MCF 10A (cell line): ENCODE measurements at regions of chr16 and their contacts with region 1.

Region 1: GRCh38 chr16:48499923-48500381 is 110.0 kb downstream of the N4BP1 start:
- DNase-seq: peak; percentile 87
- H3K4me3 Mint-ChIP-seq: no peak overlapping the region
- H3K27ac Mint-ChIP-seq: peak overlapping the region; percentile 73
- H3K4me1 Mint-ChIP-seq: peaks cover 12% of the 10 kb centered on the region
- H3K27me3 Mint-ChIP-seq: no peaks in the 10 kb centered on the region
- CTCF ChIP-seq: no peak

Region 2: DNA sequence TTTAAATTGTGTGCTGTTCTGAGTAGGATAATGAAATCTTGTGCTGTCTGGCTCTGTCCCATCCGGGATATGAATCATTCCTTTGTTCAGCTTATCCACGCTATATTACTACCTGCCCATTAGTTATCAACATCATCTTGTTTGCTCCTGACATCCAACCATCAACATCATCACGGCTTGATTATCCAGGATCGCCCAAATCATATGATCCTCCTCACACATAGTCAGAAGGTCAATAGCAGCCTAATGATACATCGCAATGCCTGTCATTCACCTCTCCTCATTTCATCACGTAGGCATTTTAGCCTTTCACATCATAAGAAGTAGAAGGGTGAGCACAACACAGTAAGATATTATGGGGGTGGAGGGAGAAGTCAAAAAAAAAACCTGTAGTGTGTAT is 37.8 kb before region 1 on chr16:
- CTCF ChIA-PET with region 1: interaction called, 3 read pairs
- POLR2A ChIA-PET with region 1: interaction called, 9 read pairs
- intact Hi-C with region 1: loop called (anchors 5 kb)
- DNase-seq: peak; percentile 71
- H3K4me3 Mint-ChIP-seq: no peak overlapping the region
- H3K27ac Mint-ChIP-seq: peak overlapping the region; percentile 1
- H3K4me1 Mint-ChIP-seq: peaks cover 33% of the 10 kb centered on the region
- H3K27me3 Mint-ChIP-seq: no peaks in the 10 kb centered on the region
- CTCF ChIP-seq: no peak

Region 3: DNA sequence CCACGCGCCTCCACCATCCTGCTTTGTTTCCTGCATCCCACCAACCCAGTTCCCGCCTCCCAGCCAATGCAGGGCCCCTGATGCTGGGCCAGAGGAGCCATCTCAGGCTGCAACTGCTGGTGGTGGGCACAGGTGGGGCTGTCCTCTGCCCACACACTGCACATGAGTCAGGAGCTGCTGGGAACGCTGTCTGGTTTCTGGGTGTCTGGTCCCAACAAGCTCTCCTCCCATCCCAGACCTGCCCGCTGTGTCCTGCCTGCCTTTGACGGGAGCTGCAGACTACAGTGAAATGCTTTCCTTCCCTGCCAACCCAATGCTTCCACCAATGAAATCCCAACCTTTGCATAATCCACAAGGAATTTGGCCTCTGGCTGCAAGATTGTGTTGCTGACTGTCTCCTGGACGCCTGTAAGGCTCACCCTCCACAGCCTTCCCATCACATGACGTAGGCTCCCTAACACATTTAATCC is 11.2 kb after region 1 on chr16:
- CTCF ChIA-PET with region 1: interaction called, 3 read pairs
- POLR2A ChIA-PET with region 1: interaction called, 21 read pairs
- intact Hi-C with region 1: no loop called
- DNase-seq: peak; percentile 83
- H3K4me3 Mint-ChIP-seq: no peak overlapping the region
- H3K27ac Mint-ChIP-seq: peak overlapping the region; percentile 80
- H3K4me1 Mint-ChIP-seq: peaks cover 9% of the 10 kb centered on the region
- H3K27me3 Mint-ChIP-seq: no peaks in the 10 kb centered on the region
- CTCF ChIP-seq: no peak